GM12878 (cell line): ENCODE measurements at regions of chr10 and their contacts with region 1.

Region 1: GRCh38 chr10:63720072-63720537 is 198.9 kb downstream of the REEP3 start:
- DNase-seq: peak; percentile 25
- ATAC-seq: peak; percentile 81
- H3K4me3 ChIP-seq: no peak overlapping the region
- H3K27ac ChIP-seq: no peak overlapping the region
- H3K4me1 ChIP-seq: no peaks in the 10 kb centered on the region
- H3K27me3 ChIP-seq: no peaks in the 10 kb centered on the region; a peak in 2 of 4 replicates
- CTCF ChIP-seq: peak; percentile 81 to 95 (median 92); a peak in 5 of 6 replicates
- EP300 ChIP-seq: no peak
- POLR2A ChIP-seq: no peak
- RAD21 ChIP-seq: peak; percentile 94

Region 2: GRCh38 chr10:63140077-63140476 is 580.0 kb before region 1 on chr10:
- CTCF ChIA-PET with region 1: interaction called, 12 read pairs
- POLR2A ChIA-PET with region 1: no interaction called
- RAD21 ChIA-PET with region 1: interaction called, 5 read pairs
- SMC1A ChIA-PET with region 1: interaction called, 7 read pairs
- in situ Hi-C with region 1: no loop called
- intact Hi-C with region 1: no loop called
- DNase-seq: no peak
- ATAC-seq: no peak
- H3K4me3 ChIP-seq: no peak overlapping the region
- H3K27ac ChIP-seq: no peak overlapping the region
- H3K4me1 ChIP-seq: peaks cover 5% of the 10 kb centered on the region
- H3K27me3 ChIP-seq: no peaks in the 10 kb centered on the region
- CTCF ChIP-seq: no peak
- EP300 ChIP-seq: no peak
- POLR2A ChIP-seq: no peak
- RAD21 ChIP-seq: no peak

Region 3: GRCh38 chr10:63173468-63174232 is 546.5 kb before region 1 on chr10:
- CTCF ChIA-PET with region 1: interaction called, 521 read pairs
- POLR2A ChIA-PET with region 1: no interaction called
- RAD21 ChIA-PET with region 1: interaction called, 241 read pairs
- SMC1A ChIA-PET with region 1: interaction called, 264 read pairs
- in situ Hi-C with region 1: no loop called
- intact Hi-C with region 1: no loop called
- DNase-seq: peak; percentile 77
- ATAC-seq: peak; percentile 99
- H3K4me3 ChIP-seq: no peak overlapping the region
- H3K27ac ChIP-seq: peak overlapping the region; percentile 55
- H3K4me1 ChIP-seq: peaks cover 18% of the 10 kb centered on the region
- H3K27me3 ChIP-seq: no peaks in the 10 kb centered on the region
- CTCF ChIP-seq: no peak
- EP300 ChIP-seq: peak; percentile 32 to 86; a peak in 2 of 4 replicates
- POLR2A ChIP-seq: no peak
- RAD21 ChIP-seq: no peak

Region 4: GRCh38 chr10:63261496-63261895 is 458.6 kb before region 1 on chr10:
- CTCF ChIA-PET with region 1: interaction called, 5 read pairs
- POLR2A ChIA-PET with region 1: no interaction called
- RAD21 ChIA-PET with region 1: interaction called, 4 read pairs
- SMC1A ChIA-PET with region 1: interaction called, 10 read pairs
- in situ Hi-C with region 1: no loop called
- intact Hi-C with region 1: no loop called
- DNase-seq: no peak
- ATAC-seq: peak; percentile 46
- H3K4me3 ChIP-seq: peak overlapping the region; percentile 35; the same call in 1 of the 2 replicates
- H3K27ac ChIP-seq: peak overlapping the region; percentile 81
- H3K4me1 ChIP-seq: peaks cover 32% of the 10 kb centered on the region
- H3K27me3 ChIP-seq: no peaks in the 10 kb centered on the region
- CTCF ChIP-seq: no peak
- EP300 ChIP-seq: 0 out of 4 replicates have a peak, but pooled peaks of 1 of the 2 experiments have one; percentile 24
- POLR2A ChIP-seq: no peak
- RAD21 ChIP-seq: no peak

Region 5: DNA sequence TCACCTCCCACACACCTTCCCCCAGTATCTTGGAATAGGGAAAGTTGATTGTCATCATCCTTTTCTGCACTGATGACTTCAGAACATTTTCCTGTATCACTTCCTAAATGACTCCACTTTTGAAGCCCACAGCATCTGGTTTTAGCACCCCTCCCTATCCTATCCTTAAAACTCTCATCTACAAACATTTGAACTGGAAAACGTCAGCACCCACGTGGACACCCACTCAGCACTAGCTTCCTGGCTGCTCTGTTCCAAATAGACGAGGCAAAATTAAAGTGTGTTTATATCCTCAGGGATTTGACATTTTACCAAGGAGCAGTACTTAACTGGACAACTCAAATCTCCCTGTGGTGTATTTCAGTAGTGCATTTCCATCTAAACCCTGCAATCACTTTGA is 125.0 kb before region 1 on chr10:
- CTCF ChIA-PET with region 1: interaction called, 11 read pairs
- POLR2A ChIA-PET with region 1: no interaction called
- RAD21 ChIA-PET with region 1: no interaction called
- SMC1A ChIA-PET with region 1: no interaction called
- in situ Hi-C with region 1: no loop called
- intact Hi-C with region 1: no loop called
- DNase-seq: no peak
- ATAC-seq: no peak
- H3K4me3 ChIP-seq: no peak overlapping the region
- H3K27ac ChIP-seq: no peak overlapping the region
- H3K4me1 ChIP-seq: no peaks in the 10 kb centered on the region
- H3K27me3 ChIP-seq: no peaks in the 10 kb centered on the region
- CTCF ChIP-seq: no peak
- EP300 ChIP-seq: no peak
- POLR2A ChIP-seq: no peak
- RAD21 ChIP-seq: no peak

Region 6: GRCh38 chr10:63670291-63670898 is 49.7 kb before region 1 on chr10:
- CTCF ChIA-PET with region 1: interaction called, 12 read pairs
- POLR2A ChIA-PET with region 1: no interaction called
- RAD21 ChIA-PET with region 1: interaction called, 7 read pairs
- SMC1A ChIA-PET with region 1: interaction called, 9 read pairs
- in situ Hi-C with region 1: no loop called
- intact Hi-C with region 1: no loop called
- DNase-seq: no peak
- ATAC-seq: peak; percentile 66
- H3K4me3 ChIP-seq: no peak overlapping the region
- H3K27ac ChIP-seq: no peak overlapping the region
- H3K4me1 ChIP-seq: peaks cover 7% of the 10 kb centered on the region
- H3K27me3 ChIP-seq: no peaks in the 10 kb centered on the region
- CTCF ChIP-seq: no peak
- EP300 ChIP-seq: no peak; a peak in 1 of 4 replicates
- POLR2A ChIP-seq: no peak
- RAD21 ChIP-seq: no peak

Region 7: DNA sequence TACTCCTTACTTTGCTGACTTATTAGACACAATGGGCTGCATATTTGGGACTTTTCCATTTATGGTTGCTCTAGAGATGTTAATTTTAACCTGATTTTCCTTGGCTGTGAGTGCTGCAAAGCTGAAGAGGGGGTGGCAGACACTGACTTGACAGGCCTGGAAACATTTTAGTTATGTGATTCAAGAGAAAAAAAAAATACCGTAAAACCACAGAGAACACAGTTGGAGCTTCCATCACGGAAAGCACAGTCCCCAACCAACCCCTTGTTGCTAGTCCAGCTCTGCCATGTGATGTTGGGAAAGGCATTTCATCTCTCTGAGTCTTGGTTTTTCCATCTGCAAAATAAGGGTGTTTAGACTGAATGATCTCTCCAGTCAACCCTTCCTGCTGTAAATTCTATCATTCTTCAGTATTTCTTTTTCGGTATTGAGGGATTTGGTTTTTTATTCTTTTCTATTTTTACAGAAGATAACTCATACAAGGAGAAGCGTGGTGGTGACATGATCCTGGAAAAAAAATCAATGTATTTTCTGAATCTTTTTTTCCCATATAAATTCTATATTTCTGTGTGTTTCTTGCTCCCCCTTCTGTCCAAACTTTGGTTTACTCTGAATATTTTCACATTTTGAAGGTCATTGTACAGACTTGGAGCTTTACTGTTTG is 47.2 kb after region 1 on chr10:
- CTCF ChIA-PET with region 1: interaction called, 18 read pairs
- POLR2A ChIA-PET with region 1: no interaction called
- RAD21 ChIA-PET with region 1: interaction called, 8 read pairs
- SMC1A ChIA-PET with region 1: interaction called, 5 read pairs
- in situ Hi-C with region 1: no loop called
- intact Hi-C with region 1: no loop called
- DNase-seq: no peak
- ATAC-seq: peak; percentile 36; the same call in 1 of the 3 replicates
- H3K4me3 ChIP-seq: no peak overlapping the region
- H3K27ac ChIP-seq: no peak overlapping the region
- H3K4me1 ChIP-seq: no peaks in the 10 kb centered on the region
- H3K27me3 ChIP-seq: no peaks in the 10 kb centered on the region; a peak in 1 of 4 replicates
- CTCF ChIP-seq: peak in 2 of 3 experiments; percentile 10 to 33; a peak in 1 of 6 replicates
- EP300 ChIP-seq: no peak
- POLR2A ChIP-seq: no peak
- RAD21 ChIP-seq: peak; percentile 52